ENCODE measurements at regions of chr11 and their contacts with region 1.

Region 1: DNA sequence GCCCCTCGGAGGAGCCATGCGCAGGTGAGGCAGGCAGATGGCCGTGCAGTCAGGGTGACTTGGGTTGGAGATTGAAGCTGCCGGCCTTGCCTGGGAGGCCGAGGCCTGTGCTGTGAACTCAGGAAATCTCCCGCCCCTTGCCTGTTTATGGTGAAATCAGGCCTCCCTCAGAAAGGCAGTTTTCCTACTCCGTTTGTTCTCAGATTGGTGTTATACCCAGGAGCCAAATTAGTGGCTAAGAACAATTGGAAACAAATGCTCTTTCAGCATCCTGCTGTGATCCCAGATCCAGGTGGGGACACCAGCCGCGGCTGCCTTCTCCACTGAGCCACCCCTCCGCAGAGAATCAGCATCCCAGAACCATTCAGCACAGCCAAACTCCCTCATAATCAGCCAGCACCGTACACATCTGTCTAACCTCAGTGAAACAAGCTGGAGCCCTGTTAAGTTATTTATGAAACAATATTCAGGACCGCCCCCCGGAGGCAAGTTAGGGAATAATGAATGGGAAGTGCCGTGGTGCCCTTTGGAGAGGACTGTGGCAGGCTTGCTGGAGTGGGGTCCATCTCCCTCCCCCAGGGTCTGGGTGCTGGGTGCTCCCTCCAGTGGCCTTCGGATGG is 60.0 kb downstream of the PKNOX2 start:
- DNase-seq: peak in 3 of 5 donors; percentile 38 to 69 (median 43)
- ATAC-seq: peak; percentile 53 to 68 (median 63)
- H3K4me3 ChIP-seq: no peak overlapping the region
- H3K27ac ChIP-seq: peak overlapping the region in 7 of 12 donors; percentile 20 to 60 (median 37)
- H3K4me1 ChIP-seq: peaks cover 0 to 18% (median 3%) of the 10 kb centered on the region in 12 donors
- H3K27me3 ChIP-seq: no peaks in the 10 kb centered on the region
- CTCF ChIP-seq: peak in 8 of 12 donors; percentile 21 to 54 (median 38)
- POLR2A ChIP-seq: no peak

Region 2: DNA sequence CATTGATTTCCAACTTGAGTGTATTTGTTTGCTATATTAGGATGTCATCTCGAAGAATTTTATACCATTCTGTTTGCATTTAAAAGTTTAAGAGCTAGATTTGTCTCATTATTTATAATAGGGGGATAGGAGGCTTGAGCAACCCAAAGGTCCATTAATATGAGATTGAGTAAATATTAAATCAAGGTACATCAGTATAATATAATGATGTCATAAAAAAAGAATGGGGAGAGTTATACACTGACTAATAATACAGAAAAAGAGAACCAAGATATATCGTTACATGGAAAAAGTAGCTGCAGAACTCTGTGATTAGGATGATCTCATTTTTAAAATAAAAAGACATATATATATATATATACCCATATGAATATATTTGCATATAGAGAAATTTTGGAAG is 531.4 kb before region 1 on chr11:
- intact Hi-C with region 1: no loop called
- DNase-seq: no peak
- ATAC-seq: no peak
- H3K4me3 ChIP-seq: no peak overlapping the region
- H3K27ac ChIP-seq: no peak overlapping the region
- H3K4me1 ChIP-seq: no peaks in the 10 kb centered on the region
- H3K27me3 ChIP-seq: no peaks in the 10 kb centered on the region
- CTCF ChIP-seq: no peak
- POLR2A ChIP-seq: no peak

Region 3: DNA sequence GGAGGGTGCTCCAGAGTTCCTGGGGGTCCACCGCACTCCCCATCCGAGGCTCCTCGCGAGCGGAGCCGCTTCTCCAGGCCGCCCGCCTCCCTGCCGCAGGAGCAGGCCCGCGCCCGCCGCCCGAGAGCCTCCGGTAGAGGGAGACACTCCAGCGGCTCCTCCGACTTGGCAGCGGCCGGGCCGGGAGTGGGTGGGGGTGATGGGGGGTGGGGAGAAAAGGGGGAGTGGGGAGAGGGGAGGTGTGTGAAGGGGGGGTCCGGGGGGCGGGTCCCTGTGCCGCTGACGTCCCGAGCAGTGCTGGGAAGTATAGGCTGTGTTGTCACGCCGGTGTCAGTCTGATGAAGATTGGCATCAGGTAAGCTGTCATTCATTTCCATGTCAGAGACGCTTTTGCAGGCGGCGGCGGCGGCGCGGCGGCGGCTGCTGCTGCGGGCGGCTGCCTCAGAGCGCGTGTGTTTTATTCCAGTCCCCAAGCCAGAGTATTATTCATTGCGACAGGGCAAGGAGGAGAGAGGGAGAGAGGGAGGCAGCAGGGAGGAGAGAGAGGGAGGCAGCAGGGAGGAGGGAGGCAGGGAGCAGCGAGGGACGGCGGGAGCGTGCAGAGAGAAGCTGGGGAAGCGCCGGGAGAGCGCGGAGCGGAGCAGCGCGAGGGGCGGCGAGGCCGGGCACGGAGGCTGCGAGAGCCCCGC is 59.9 kb before region 1 on chr11 and contains the start of gene PKNOX2:
- intact Hi-C with region 1: loop called in 6 of 10 experiments (anchors 2 to 10 kb)
- DNase-seq: peak; percentile 78 to 91 (median 84)
- ATAC-seq: peak; percentile 23 to 85 (median 82)
- H3K4me3 ChIP-seq: peak within 1 kb of the TSS; percentile 54 to 86 (median 68)
- H3K27ac ChIP-seq: peak within 1 kb of the TSS; percentile 35 to 86 (median 80)
- H3K4me1 ChIP-seq: peaks cover 0 to 47% (median 24%) of the 10 kb centered on the region in 12 donors
- H3K27me3 ChIP-seq: peaks cover 0 to 48% (median 2%) of the 10 kb centered on the region in 9 donors
- CTCF ChIP-seq: peak; percentile 37 to 84 (median 62)
- POLR2A ChIP-seq: peak in 1 of 2 donors; percentile 38
- total RNA-seq, gene PKNOX2: 3.1 to 9.4 (median 5.0) TPM

Measured in heart left ventricle (tissue), 16 donors.